Activated CD8-positive, alpha-beta T cell treated with anti-CD3 and anti-CD28 coated beads for 36 hours (primary cell): ENCODE measurements at regions of chr12 and their contacts with region 1.

Region 1: DNA sequence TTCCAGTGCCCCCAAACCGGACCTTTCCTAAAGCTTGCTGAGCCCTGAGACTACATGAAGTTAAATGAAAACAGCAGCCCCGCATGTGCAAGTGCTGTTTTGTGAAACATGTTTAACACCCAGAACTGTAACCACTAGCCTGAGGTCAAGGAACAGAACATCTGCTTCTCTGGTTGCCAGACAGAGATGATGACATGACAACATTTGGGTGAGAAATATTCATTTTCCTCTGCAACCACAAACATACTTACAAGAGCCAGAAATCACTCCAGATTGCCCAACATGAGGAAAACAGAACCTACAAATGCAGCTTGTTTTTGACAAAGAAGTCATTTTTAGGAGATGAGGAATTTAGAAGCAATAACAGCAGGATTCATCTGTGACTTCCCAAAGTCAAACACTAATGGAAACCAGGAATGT is 110.4 kb downstream of the BCAT1 start:
- DNase-seq: peak; percentile 64
- ATAC-seq: no peak
- H3K4me3 Mint-ChIP-seq: no peak overlapping the region
- H3K27ac Mint-ChIP-seq: peak overlapping the region; percentile 80
- H3K4me1 Mint-ChIP-seq: peaks cover 35% of the 10 kb centered on the region
- H3K27me3 Mint-ChIP-seq: peaks cover 6% of the 10 kb centered on the region
- CTCF ChIP-seq: no peak

Region 2: DNA sequence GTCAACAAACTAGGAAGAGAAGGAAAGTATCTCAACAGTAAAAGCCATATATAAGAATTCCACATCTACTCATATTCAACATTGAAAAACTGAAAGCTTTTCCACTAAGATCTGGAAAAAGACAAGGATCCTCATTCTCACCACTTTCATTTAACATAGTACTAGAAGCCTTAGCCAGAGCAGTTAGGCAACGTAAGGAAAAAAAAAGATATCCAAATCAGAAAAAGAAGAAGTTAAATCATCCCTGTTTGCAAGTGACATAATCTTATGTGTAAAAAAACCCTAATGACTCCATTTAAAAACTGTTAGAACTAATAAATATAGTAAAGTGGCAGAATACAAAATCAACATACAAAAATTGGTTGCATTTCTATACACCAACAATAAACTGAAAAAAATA is 315.8 kb before region 1 on chr12:
- CTCF ChIA-PET with region 1: no interaction called
- POLR2A ChIA-PET with region 1: no interaction called
- intact Hi-C with region 1: no loop called
- DNase-seq: no peak
- ATAC-seq: no peak
- H3K4me3 Mint-ChIP-seq: no peak overlapping the region
- H3K27ac Mint-ChIP-seq: no peak overlapping the region
- H3K4me1 Mint-ChIP-seq: no peaks in the 10 kb centered on the region
- H3K27me3 Mint-ChIP-seq: no peaks in the 10 kb centered on the region
- CTCF ChIP-seq: no peak

Region 3: GRCh38 chr12:24724814-24725213 is 113.7 kb before region 1 on chr12:
- CTCF ChIA-PET with region 1: no interaction called
- POLR2A ChIA-PET with region 1: no interaction called
- intact Hi-C with region 1: loop called (anchors 2 kb)
- DNase-seq: peak; percentile 45
- ATAC-seq: peak; percentile 74
- H3K4me3 Mint-ChIP-seq: no peak overlapping the region
- H3K27ac Mint-ChIP-seq: peak overlapping the region; percentile 44
- H3K4me1 Mint-ChIP-seq: peaks cover 27% of the 10 kb centered on the region
- H3K27me3 Mint-ChIP-seq: no peaks in the 10 kb centered on the region
- CTCF ChIP-seq: no peak

Region 4: DNA sequence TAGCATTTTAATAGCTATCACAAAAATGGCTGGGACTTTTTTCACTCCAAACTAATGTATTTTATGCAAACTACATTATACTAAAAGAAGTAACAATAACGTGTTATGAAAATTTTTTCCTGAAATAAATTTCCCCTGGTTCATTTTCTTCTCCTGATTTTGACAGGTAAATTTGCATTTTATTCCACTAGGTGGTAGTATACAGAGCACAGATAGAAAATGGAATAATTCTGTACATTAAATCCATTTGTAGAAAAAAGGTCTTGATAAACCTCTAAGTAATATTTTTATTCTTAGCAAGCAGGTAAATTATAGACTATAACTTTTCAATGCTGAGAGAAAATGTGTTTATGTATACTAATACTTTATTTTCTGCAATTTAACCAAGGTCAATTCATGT is 13.9 kb after region 1 on chr12:
- CTCF ChIA-PET with region 1: interaction called, 32 read pairs
- POLR2A ChIA-PET with region 1: interaction called, 3 read pairs
- intact Hi-C with region 1: no loop called
- DNase-seq: no peak
- ATAC-seq: no peak
- H3K4me3 Mint-ChIP-seq: no peak overlapping the region
- H3K27ac Mint-ChIP-seq: no peak overlapping the region
- H3K4me1 Mint-ChIP-seq: peaks cover 20% of the 10 kb centered on the region
- H3K27me3 Mint-ChIP-seq: peaks cover 7% of the 10 kb centered on the region
- CTCF ChIP-seq: peak; percentile 69

Region 5: GRCh38 chr12:24922090-24922489 is 83.5 kb after region 1 on chr12:
- CTCF ChIA-PET with region 1: no interaction called
- POLR2A ChIA-PET with region 1: interaction called, 4 read pairs
- intact Hi-C with region 1: loop called (anchors 1 kb)
- DNase-seq: peak; percentile 25
- ATAC-seq: peak; percentile 18
- H3K4me3 Mint-ChIP-seq: no peak overlapping the region
- H3K27ac Mint-ChIP-seq: peak overlapping the region; percentile 43
- H3K4me1 Mint-ChIP-seq: peaks cover 42% of the 10 kb centered on the region
- H3K27me3 Mint-ChIP-seq: peaks cover 4% of the 10 kb centered on the region
- CTCF ChIP-seq: no peak